Stomach (tissue), 19 donors: ENCODE measurements at regions of chr1 and their contacts with region 1.

Region 1: DNA sequence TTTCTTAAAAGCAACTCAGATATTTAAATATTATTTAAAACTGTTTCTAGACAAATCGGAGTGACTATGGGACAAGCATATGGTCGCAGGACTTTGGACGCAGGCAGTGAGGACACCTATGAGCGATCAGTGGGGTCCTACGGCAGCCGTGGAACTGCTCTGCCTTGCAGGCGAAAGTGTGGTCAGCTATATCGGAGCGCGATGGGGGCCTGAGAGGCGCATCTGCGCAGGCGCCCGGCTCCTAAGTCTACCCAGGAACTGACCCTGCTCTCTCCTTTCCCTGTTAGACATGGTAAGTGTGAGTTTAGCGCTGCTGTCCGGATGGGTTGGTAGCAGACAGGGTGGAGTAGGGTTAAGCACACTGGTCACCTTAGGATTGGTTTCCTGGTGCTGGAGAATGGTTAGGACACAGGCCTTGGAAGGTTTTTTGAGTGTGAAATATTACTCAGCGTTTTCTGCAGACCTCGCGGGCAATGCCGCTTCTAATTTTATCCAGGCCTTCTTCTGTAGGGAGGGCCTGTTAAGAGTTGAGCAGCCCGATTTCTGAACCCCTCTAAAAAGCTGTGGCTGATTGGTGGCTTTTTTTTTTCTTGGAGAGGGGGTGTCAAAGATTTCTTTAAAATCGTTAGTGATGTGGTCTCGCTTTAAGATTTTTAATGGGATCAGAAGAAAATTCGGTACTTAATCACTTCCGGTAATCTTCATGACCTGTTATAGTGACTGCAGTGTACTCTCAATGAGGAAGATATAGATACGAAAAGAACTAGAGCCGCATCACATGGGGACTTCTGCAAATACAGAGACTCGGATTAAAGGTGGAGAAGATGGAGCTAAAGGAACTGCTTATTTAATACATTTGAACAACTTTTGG is at the start of gene RABGGTB:
- DNase-seq: peak; percentile 95 to 99
- H3K4me3 ChIP-seq: peak within 1 kb of the TSS; percentile 57 to 69 (median 63)
- H3K27ac ChIP-seq: peak within 1 kb of the TSS; percentile 71 to 93 (median 87)
- H3K4me1 ChIP-seq: peaks cover 37 to 54% (median 42%) of the 10 kb centered on the region in 4 donors
- H3K27me3 ChIP-seq: no peaks in the 10 kb centered on the region
- CTCF ChIP-seq: peak in 1 of 7 experiments; percentile 3
- EP300 ChIP-seq: no peak
- POLR2A ChIP-seq: peak in 1 of 4 donors; percentile 71
- total RNA-seq, gene RABGGTB: 38.8 to 156 (median 57.2) TPM

Region 2: GRCh38 chr1:75567191-75567590 is 219.0 kb before region 1 on chr1:
- intact Hi-C with region 1: no loop called
- DNase-seq: no peak
- H3K4me3 ChIP-seq: no peak overlapping the region
- H3K27ac ChIP-seq: no peak overlapping the region
- H3K4me1 ChIP-seq: no peaks in the 10 kb centered on the region
- H3K27me3 ChIP-seq: no peaks in the 10 kb centered on the region
- CTCF ChIP-seq: no peak
- EP300 ChIP-seq: no peak
- POLR2A ChIP-seq: no peak

Region 3: GRCh38 chr1:75724472-75725022 is 61.7 kb before region 1 on chr1 and contains the start of gene ACADM:
- intact Hi-C with region 1: loop called (anchors 10 kb)
- DNase-seq: peak; percentile 89 to 95
- H3K4me3 ChIP-seq: peak within 1 kb of the TSS; percentile 74 to 81 (median 78)
- H3K27ac ChIP-seq: peak within 1 kb of the TSS; percentile 91 to 98 (median 93)
- H3K4me1 ChIP-seq: peaks cover 0 to 48% (median 32%) of the 10 kb centered on the region in 4 donors
- H3K27me3 ChIP-seq: no peaks in the 10 kb centered on the region
- CTCF ChIP-seq: no peak
- EP300 ChIP-seq: no peak
- POLR2A ChIP-seq: peak in 1 of 4 donors; percentile 48
- total RNA-seq, gene ACADM: 15.2 to 77.5 (median 26.3) TPM

Region 4: GRCh38 chr1:75836528-75837100 is 50.4 kb after region 1 on chr1:
- intact Hi-C with region 1: no loop called
- DNase-seq: no peak
- H3K4me3 ChIP-seq: no peak overlapping the region
- H3K27ac ChIP-seq: no peak overlapping the region
- H3K4me1 ChIP-seq: no peaks in the 10 kb centered on the region
- H3K27me3 ChIP-seq: no peaks in the 10 kb centered on the region
- CTCF ChIP-seq: no peak
- EP300 ChIP-seq: no peak
- POLR2A ChIP-seq: no peak